ENCODE measurements at regions of chr10 and their contacts with region 1.

Region 1: GRCh38 chr10:87817609-87818504 is at the start of gene ATAD1:
- DNase-seq: peak; percentile 90
- H3K4me3 Mint-ChIP-seq: peak within 1 kb of the TSS; percentile 87
- H3K27ac Mint-ChIP-seq: peak within 1 kb of the TSS; percentile 94
- H3K4me1 Mint-ChIP-seq: peaks cover 28% of the 10 kb centered on the region
- H3K27me3 Mint-ChIP-seq: no peaks in the 10 kb centered on the region
- total RNA-seq, gene ATAD1: 47.4 to 53.7 TPM

Region 2: DNA sequence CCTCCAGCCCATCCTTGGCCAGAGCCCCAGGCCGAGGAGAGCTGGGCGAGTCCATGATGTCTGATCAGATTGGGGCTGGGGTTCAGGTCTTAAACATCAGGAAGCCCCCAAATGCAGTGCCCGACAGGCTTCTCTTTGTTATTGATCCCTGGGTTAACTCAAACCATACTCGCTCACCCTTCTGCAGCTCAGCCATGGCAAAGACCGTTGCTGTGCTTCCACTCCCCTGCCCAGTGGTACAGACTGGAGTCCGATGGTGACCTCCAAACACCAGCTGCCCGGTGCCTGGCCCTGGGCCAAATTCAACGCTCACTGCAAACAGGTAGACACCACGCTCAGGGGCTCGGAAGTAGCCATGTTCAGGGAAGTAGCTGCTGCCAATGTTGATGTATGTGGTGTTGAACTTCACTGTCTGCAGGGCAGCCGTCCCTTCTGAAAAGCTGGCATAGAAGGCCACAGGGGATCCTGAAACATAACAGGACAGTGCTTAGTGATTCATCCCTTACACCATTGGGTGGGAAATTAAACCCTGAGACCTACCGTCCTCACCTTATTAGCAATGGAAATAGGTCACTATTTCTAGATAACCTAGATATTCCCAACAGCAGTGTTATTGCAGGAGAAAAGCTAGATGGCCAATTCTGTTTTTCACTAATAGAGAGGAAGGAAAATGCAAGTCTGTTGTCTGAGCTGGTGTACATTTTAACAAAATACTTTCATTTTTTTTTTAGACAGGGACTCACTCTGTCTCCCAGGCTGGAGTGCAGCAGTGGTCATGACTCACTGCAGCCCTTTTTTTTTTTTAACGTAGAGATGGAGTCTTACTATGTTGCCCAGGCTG is 881.0 kb before region 1 on chr10:
- CTCF ChIA-PET with region 1: no interaction called
- intact Hi-C with region 1: no loop called
- DNase-seq: no peak
- H3K4me3 Mint-ChIP-seq: no peak overlapping the region
- H3K27ac Mint-ChIP-seq: no peak overlapping the region
- H3K4me1 Mint-ChIP-seq: no peaks in the 10 kb centered on the region
- H3K27me3 Mint-ChIP-seq: no peaks in the 10 kb centered on the region

Region 3: DNA sequence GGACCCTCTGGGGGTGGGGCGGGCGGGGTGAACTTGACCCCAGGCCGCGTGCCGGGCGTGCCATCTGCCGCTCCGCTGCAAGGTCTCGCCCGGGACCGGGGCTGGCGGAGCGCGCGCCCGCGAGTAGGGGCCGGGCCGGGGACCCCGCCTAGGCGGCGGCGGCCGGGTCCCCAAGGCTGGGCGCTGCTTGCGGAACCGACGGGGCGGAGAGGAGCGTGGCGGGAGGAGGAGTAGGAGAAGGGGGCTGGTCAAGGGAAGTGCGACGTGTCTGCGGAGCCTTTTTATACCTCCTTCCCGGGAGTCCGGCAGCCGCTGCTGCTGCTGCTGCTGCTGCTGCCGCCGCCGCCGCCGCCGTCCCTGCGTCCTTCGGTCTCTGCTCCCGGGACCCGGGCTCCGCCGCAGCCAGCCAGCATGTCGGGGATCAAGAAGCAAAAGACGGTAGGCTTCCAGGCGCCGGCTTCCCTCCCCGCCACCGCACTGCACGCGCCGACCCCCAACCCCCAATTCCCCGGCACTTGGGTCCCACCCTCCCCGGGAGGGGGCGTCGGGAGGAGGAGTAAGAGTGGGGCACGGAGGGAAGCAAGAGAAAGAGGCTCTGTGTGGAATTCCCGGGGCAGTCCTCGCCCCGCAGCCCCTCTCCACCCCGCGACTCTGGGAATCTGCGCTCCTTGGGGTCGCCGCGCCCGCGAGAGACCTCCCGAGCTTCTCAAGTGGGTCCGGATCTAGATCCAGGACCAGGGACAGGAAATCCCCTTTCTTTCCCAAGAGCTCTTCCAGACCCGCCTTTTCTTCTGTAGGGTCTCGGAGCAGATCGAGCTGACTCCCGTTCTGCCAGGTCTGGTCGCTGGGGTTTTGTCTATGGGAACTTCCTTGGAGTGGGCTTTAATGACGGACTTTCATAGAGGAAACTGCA is 158.0 kb before region 1 on chr10 and contains the start of gene PAPSS2:
- CTCF ChIA-PET with region 1: interaction called, 4 read pairs
- intact Hi-C with region 1: loop called (anchors 5 kb)
- DNase-seq: peak; percentile 27
- H3K4me3 Mint-ChIP-seq: peak within 1 kb of the TSS; percentile 74
- H3K27ac Mint-ChIP-seq: no peak within 1 kb of the TSS
- H3K4me1 Mint-ChIP-seq: peaks cover 10% of the 10 kb centered on the region
- H3K27me3 Mint-ChIP-seq: peaks cover 48% of the 10 kb centered on the region
- total RNA-seq, gene PAPSS2: 0.38 TPM in 1 of 2 experiments, not detected in the other

Region 4: GRCh38 chr10:87691506-87692070 is 126.3 kb before region 1 on chr10:
- CTCF ChIA-PET with region 1: no interaction called
- intact Hi-C with region 1: no loop called
- DNase-seq: no peak
- H3K4me3 Mint-ChIP-seq: no peak overlapping the region
- H3K27ac Mint-ChIP-seq: no peak overlapping the region
- H3K4me1 Mint-ChIP-seq: no peaks in the 10 kb centered on the region
- H3K27me3 Mint-ChIP-seq: no peaks in the 10 kb centered on the region

Region 5: DNA sequence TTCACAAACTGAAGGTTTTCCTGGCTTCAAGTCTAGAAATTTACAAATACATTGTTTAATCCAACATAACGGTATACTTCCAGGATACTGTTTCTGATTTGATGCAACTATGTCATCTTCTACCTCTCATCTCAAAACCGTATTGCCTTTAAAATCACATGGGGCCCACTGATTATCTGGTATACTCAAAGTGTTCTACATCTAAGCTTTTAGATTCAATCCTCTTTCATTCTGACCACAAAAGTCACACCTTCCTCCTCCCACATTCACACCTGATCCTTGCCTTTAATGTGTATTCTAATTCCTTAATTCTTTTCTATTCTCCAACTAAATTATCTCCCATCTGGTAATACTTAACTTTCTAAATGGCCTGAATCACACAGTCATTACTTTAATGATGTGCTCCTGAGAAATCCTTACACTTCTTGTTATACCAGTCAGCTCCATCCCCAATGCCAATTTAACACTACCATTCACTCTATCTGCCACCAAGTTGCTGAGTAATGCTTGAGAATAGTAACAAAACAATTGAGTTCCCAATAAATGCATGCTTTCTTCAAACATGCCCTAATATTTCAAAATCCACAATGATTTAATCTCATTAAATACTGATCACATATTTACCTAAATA is 12.8 kb before region 1 on chr10:
- CTCF ChIA-PET with region 1: no interaction called
- intact Hi-C with region 1: loop called (anchors 1 kb)
- DNase-seq: no peak
- H3K4me3 Mint-ChIP-seq: no peak overlapping the region
- H3K27ac Mint-ChIP-seq: no peak overlapping the region
- H3K4me1 Mint-ChIP-seq: peaks cover 33% of the 10 kb centered on the region
- H3K27me3 Mint-ChIP-seq: no peaks in the 10 kb centered on the region

Region 6: GRCh38 chr10:87850742-87851205 is 32.9 kb after region 1 on chr10:
- CTCF ChIA-PET with region 1: interaction called, 5 read pairs
- intact Hi-C with region 1: loop called (anchors 2 kb)
- DNase-seq: peak; percentile 71
- H3K4me3 Mint-ChIP-seq: no peak overlapping the region
- H3K27ac Mint-ChIP-seq: no peak overlapping the region
- H3K4me1 Mint-ChIP-seq: peaks cover 4% of the 10 kb centered on the region
- H3K27me3 Mint-ChIP-seq: no peaks in the 10 kb centered on the region

Measured in activated naive CD4-positive, alpha-beta T cell treated with anti-CD3 and anti-CD28 coated beads for 36 hours (primary cell).